ENCODE measurements at regions of chr10 and their contacts with region 1.

Region 1: GRCh38 chr10:125152450-125153368 is 7.7 kb downstream of the CTBP2 start:
- DNase-seq: no peak
- ATAC-seq: no peak
- H3K4me3 ChIP-seq: no peak overlapping the region
- H3K27ac ChIP-seq: no peak overlapping the region
- H3K4me1 ChIP-seq: peaks cover 33 to 35% of the 10 kb centered on the region in 2 experiments; a peak in 4 of 5 replicates
- H3K27me3 ChIP-seq: no peaks in the 10 kb centered on the region
- CTCF ChIP-seq: no peak
- EP300 ChIP-seq: no peak
- POLR2A ChIP-seq: no peak
- RAD21 ChIP-seq: no peak

Region 2: DNA sequence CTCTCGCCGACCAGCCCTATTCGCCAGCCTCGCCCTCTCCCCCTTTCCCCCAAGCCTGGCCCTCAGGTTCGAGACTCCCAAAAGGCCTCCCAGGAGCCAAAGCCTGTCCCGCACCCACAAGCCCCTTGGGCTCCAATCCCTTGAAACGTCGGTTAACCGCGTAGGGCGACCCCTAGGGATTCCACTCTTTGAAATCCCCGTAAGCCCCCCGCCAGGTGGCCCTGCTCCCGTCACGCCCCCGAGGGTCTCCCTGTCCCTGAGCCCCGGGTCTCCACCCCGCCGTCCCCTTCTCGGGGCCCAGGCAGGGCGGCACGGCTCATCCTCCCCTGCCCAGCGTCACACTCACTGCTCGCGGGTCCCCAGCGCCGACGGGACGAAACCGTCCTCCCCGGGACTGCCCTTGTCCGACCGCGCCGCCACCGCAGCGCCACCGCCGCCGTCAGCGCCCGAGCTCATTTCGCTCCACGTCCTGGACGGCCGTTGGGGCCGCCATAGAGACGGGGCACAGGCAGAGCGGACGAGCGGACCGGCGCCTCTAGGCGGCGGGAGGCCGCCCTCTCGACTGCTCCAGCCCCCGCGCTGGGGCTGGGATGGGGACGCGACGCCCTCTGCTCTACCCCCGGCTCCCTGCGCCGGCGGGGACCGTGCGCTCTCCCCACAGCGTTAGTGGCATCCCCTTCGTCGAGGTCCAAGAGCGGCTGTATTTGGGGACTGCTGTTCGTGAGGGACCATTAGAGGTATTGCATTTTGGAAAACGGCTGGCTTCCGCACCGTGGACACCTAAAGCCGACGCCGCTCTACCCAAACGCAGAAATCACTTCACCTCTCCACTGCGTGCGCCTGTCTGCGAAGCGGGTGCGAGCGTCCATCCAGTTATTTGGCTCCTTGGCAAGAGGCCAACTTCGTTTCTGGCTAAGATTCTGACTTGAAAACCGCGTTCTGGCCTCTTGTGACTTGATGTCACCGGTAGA is 361.0 kb before region 1 on chr10 and contains the start of gene EEF1AKMT2:
- CTCF ChIA-PET with region 1: no interaction called
- POLR2A ChIA-PET with region 1: no interaction called
- in situ Hi-C with region 1: no loop called
- intact Hi-C with region 1: loop called (anchors 5 kb)
- DNase-seq: peak; percentile 85 to 91 (median 88)
- ATAC-seq: peak; percentile 92
- H3K4me3 ChIP-seq: peak within 1 kb of the TSS; percentile 60
- H3K27ac ChIP-seq: peak within 1 kb of the TSS; percentile 86
- H3K4me1 ChIP-seq: peaks cover 2 to 10% of the 10 kb centered on the region in 2 experiments; a peak in 3 of 5 replicates
- H3K27me3 ChIP-seq: no peaks in the 10 kb centered on the region
- CTCF ChIP-seq: peak in 2 of 3 experiments; percentile 18; a peak in 3 of 6 replicates
- EP300 ChIP-seq: peak; percentile 59
- POLR2A ChIP-seq: peak; percentile 91
- RAD21 ChIP-seq: no peak
- polyA plus RNA-seq, gene EEF1AKMT2: 9.3 to 9.8 TPM

Measured in K562 (cell line).